Activated CD4-positive, alpha-beta T cell treated with anti-CD3 and anti-CD28 coated beads, Interleukin-2, amount 10 ng/mL, durations not matched to agents 7 days and 5 days (primary cell): ENCODE measurements at regions of chr1 and their contacts with region 1.

Region 1: DNA sequence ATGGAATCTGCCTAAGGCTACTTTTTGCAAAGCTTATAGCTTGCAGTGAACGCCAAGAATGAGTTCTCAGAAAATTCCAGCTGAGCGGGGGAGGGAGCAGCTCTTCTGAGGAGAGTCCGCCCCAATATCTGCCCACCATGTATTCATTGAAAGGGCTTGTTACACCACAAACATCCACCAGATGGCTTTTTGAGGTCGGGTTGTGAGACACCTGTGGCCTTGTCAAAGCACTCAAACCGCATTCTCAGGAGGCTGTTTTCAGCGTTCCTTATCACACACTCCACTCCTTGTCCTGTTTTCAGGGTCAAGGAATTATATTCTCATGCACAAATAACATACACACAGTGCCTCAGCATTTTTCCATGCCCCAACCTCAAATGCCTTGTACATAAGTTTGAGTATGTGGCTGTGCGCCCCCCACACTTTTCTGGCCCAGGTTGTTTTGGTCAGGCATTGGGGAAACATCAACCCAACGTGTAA is 3.9 kb upstream of the C4BPB start:
- DNase-seq: peak; percentile 78
- H3K4me3 Mint-ChIP-seq: no peak overlapping the region
- H3K27ac Mint-ChIP-seq: no peak overlapping the region
- H3K4me1 Mint-ChIP-seq: peaks cover 37% of the 10 kb centered on the region
- H3K27me3 Mint-ChIP-seq: peaks cover 20% of the 10 kb centered on the region

Region 2: GRCh38 chr1:207069858-207070506 is 14.8 kb before region 1 on chr1:
- CTCF ChIA-PET with region 1: interaction called, 14 read pairs
- POLR2A ChIA-PET with region 1: no interaction called
- DNase-seq: no peak
- H3K4me3 Mint-ChIP-seq: no peak overlapping the region
- H3K27ac Mint-ChIP-seq: peak overlapping the region; percentile 76
- H3K4me1 Mint-ChIP-seq: peaks cover 37% of the 10 kb centered on the region
- H3K27me3 Mint-ChIP-seq: peaks cover 7% of the 10 kb centered on the region

Region 3: GRCh38 chr1:207097871-207098324 is 13.2 kb after region 1 on chr1:
- CTCF ChIA-PET with region 1: interaction called, 10 read pairs
- POLR2A ChIA-PET with region 1: no interaction called
- DNase-seq: no peak
- H3K4me3 Mint-ChIP-seq: no peak overlapping the region
- H3K27ac Mint-ChIP-seq: peak overlapping the region; percentile 42
- H3K4me1 Mint-ChIP-seq: peaks cover 14% of the 10 kb centered on the region
- H3K27me3 Mint-ChIP-seq: peaks cover 9% of the 10 kb centered on the region

Region 4: DNA sequence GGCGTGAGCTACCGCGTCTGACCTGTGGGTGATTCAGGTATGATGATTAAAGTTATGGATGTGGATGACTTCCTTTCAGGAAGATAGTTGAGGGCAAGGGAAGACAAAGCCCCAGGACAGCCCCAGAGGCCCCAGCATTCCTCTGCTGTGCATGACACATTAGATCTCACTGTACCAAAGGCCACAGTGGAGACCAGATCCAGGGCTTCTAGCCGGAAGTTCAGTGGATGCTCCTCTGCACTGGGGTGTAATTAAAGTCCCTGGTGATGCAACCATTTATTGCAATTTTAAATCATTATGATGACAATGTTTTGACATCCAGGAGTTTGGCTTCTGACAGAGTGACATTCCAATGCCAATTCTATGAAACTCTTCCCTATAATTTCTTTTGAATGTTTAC is 24.3 kb after region 1 on chr1:
- CTCF ChIA-PET with region 1: no interaction called
- POLR2A ChIA-PET with region 1: no interaction called
- DNase-seq: no peak
- H3K4me3 Mint-ChIP-seq: no peak overlapping the region
- H3K27ac Mint-ChIP-seq: no peak overlapping the region
- H3K4me1 Mint-ChIP-seq: no peaks in the 10 kb centered on the region
- H3K27me3 Mint-ChIP-seq: peaks cover 23% of the 10 kb centered on the region

Region 5: DNA sequence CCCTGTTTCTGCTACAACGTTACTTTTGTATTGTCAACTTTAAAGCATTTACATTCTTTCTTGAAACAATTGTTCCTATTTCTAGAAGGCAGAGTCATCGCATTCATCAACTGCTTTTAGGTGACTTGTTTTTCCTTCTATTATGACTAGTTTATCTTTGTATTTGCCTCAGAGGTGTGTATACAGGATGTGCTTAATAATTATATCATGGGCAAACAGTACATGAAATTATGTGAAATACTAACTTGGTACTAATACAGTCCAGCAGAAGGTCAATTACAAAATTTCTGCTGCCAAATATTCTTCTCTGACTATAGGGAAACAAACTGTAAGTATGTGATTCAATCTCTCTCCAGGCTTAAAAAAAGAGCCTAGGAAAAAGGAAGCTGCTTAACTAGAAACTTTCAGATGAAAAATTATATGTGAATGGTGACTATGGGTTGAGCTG is 120.9 kb after region 1 on chr1:
- CTCF ChIA-PET with region 1: no interaction called
- POLR2A ChIA-PET with region 1: no interaction called
- DNase-seq: no peak
- H3K4me3 Mint-ChIP-seq: no peak overlapping the region
- H3K27ac Mint-ChIP-seq: no peak overlapping the region
- H3K4me1 Mint-ChIP-seq: peaks cover 14% of the 10 kb centered on the region
- H3K27me3 Mint-ChIP-seq: peaks cover 8% of the 10 kb centered on the region